Vagina (tissue), 2 donors: ENCODE measurements at regions of chr6 and their contacts with region 1.

Region 1: DNA sequence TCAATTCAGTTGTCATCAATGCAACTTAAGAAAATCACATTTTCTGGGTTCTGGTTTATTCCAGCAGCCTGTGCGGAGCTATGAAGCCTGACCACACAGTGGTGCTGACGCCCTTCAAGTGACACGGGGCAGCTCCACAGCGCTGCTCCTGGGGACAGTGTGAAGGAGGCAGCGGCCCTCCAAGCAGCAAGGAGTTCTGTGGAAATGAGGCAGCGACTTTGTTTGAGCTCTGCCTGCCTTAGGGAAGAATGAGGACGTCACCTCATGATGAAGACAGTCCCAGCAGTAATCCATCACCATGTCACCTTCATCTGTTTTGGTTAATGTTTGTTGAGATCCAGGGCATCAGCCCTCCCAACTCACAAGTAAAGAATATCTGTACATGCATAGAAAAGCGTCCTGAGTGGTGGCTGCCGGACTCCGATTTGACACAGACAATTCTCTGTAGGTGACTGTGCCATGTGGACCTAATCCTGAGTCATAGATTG is 168.5 kb upstream of the UST start:
- DNase-seq: no peak
- H3K4me3 ChIP-seq: no peak overlapping the region
- H3K27ac ChIP-seq: no peak overlapping the region
- H3K4me1 ChIP-seq: no peaks in the 10 kb centered on the region
- H3K27me3 ChIP-seq: no peaks in the 10 kb centered on the region
- CTCF ChIP-seq: peak; percentile 21 to 80 (median 57)
- POLR2A ChIP-seq: no peak

Region 2: DNA sequence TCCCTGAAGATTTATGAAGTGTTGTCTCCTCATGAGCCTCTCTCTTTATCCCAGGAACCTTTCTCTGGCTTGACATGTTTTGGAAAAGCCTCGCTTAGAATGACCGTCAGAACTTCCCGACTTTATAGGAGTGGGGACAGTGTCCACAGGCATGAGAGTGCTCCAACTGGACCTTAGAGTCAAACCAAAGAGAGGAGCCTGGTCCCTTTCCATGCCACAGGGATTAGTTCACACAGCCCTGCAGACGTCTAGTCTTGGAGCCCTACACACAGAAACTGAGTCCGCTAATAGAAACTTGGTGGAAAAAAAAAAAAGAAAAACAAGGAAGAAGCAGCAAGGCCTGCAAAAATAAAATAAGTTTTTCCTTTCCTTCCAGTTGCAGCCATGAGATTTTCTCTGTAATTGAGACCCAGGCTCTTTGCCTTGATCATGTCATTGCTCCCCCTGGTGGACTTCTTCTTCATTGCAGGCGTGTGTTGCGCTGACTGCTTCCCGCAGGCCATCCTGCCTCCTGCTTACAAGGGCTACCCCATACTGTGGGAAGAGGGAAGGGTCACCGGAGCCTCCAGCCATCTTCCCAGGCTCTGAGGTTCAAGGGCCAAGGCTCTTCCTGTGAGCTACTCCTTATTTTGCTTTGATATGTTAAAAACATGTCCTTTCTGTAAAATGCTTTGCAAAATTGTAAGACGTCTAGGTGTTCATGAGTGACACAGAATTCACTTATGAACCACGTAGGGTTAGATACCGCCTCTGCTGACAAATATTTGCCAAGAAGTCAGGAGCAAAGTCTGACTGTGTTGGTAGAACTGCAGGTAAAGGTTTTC is 369.5 kb after region 1 on chr6:
- intact Hi-C with region 1: loop called (anchors 5 kb)
- DNase-seq: no peak
- H3K4me3 ChIP-seq: no peak overlapping the region
- H3K27ac ChIP-seq: no peak overlapping the region
- H3K4me1 ChIP-seq: peaks cover 19% of the 10 kb centered on the region
- H3K27me3 ChIP-seq: no peaks in the 10 kb centered on the region
- CTCF ChIP-seq: peak; percentile 73 to 88 (median 85)
- POLR2A ChIP-seq: no peak

Region 3: GRCh38 chr6:148972481-148972880 is 394.2 kb after region 1 on chr6:
- intact Hi-C with region 1: loop called (anchors 10 kb)
- DNase-seq: peak in 1 of 2 donors; percentile 80
- H3K4me3 ChIP-seq: no peak overlapping the region
- H3K27ac ChIP-seq: no peak overlapping the region
- H3K4me1 ChIP-seq: no peaks in the 10 kb centered on the region
- H3K27me3 ChIP-seq: no peaks in the 10 kb centered on the region
- CTCF ChIP-seq: no peak
- POLR2A ChIP-seq: no peak

Region 4: GRCh38 chr6:150352321-150353291 is 1774.3 kb after region 1 on chr6:
- intact Hi-C with region 1: no loop called
- DNase-seq: no peak
- H3K4me3 ChIP-seq: no peak overlapping the region
- H3K27ac ChIP-seq: no peak overlapping the region
- H3K4me1 ChIP-seq: no peaks in the 10 kb centered on the region
- H3K27me3 ChIP-seq: no peaks in the 10 kb centered on the region
- CTCF ChIP-seq: no peak
- POLR2A ChIP-seq: no peak